PC-3 (cell line): ENCODE measurements at regions of chr1 and their contacts with region 1.

Region 1: GRCh38 chr1:153977250-153978240 is at the start of gene JTB:
- DNase-seq: peak; percentile 89
- ATAC-seq: peak; percentile 91
- H3K4me3 ChIP-seq: peak within 1 kb of the TSS; percentile 79
- H3K27ac ChIP-seq: peak within 1 kb of the TSS; percentile 8
- H3K4me1 ChIP-seq: peaks cover 18% of the 10 kb centered on the region
- H3K27me3 ChIP-seq: no peaks in the 10 kb centered on the region
- CTCF ChIP-seq: no peak
- total RNA-seq, gene JTB: 377 and 388 TPM in 2 replicates

Region 2: GRCh38 chr1:153929981-153930948 is 47.3 kb before region 1 on chr1:
- CTCF ChIA-PET with region 1: no interaction called
- POLR2A ChIA-PET with region 1: no interaction called
- intact Hi-C with region 1: no loop called
- DNase-seq: no peak
- ATAC-seq: 0 out of 2 replicates have a peak, but pooled peaks have one; percentile 34
- H3K4me3 ChIP-seq: no peak overlapping the region
- H3K27ac ChIP-seq: no peak overlapping the region
- H3K4me1 ChIP-seq: no peaks in the 10 kb centered on the region
- H3K27me3 ChIP-seq: no peaks in the 10 kb centered on the region
- CTCF ChIP-seq: peak; percentile 15; the same call in 1 of the 2 replicates

Region 3: GRCh38 chr1:153967082-153968000 is 10.2 kb before region 1 on chr1 and contains the start of gene CREB3L4:
- CTCF ChIA-PET with region 1: interaction called, 5 read pairs
- POLR2A ChIA-PET with region 1: interaction called, 13 read pairs
- intact Hi-C with region 1: loop called (anchors 1 kb)
- DNase-seq: peak; percentile 98
- ATAC-seq: peak; percentile 68
- H3K4me3 ChIP-seq: peak within 1 kb of the TSS; percentile 71
- H3K27ac ChIP-seq: peak within 1 kb of the TSS; percentile 81
- H3K4me1 ChIP-seq: peaks cover 31% of the 10 kb centered on the region
- H3K27me3 ChIP-seq: no peaks in the 10 kb centered on the region
- CTCF ChIP-seq: peak; percentile 55
- total RNA-seq, gene CREB3L4: 22.9 and 28.7 TPM in 2 replicates

Region 4: DNA sequence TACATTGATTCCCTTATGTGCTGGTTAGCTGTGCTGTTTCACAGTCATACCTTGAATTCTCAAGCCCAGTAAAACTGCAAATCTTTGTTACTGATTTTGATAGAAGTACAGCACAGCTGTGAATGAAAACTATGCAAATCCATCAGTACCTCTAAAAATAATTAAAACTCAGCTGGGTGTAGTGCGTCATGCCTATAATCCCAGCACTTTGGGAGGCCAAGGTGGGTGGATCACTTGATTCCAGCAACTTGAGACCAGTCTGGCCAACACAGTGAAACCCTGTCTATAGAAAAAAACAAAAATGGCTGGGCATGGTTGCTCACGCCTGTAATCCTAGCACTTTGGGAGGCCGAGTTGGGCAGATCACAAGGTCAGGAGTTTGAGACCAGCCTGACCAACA is 116.2 kb after region 1 on chr1:
- CTCF ChIA-PET with region 1: no interaction called
- POLR2A ChIA-PET with region 1: no interaction called
- intact Hi-C with region 1: no loop called
- DNase-seq: no peak
- ATAC-seq: no peak
- H3K4me3 ChIP-seq: no peak overlapping the region
- H3K27ac ChIP-seq: no peak overlapping the region
- H3K4me1 ChIP-seq: no peaks in the 10 kb centered on the region
- H3K27me3 ChIP-seq: no peaks in the 10 kb centered on the region
- CTCF ChIP-seq: no peak

Region 5: GRCh38 chr1:154157520-154158306 is 180.2 kb after region 1 on chr1:
- CTCF ChIA-PET with region 1: no interaction called
- POLR2A ChIA-PET with region 1: no interaction called
- intact Hi-C with region 1: no loop called
- DNase-seq: no peak
- ATAC-seq: no peak
- H3K4me3 ChIP-seq: no peak overlapping the region
- H3K27ac ChIP-seq: no peak overlapping the region
- H3K4me1 ChIP-seq: no peaks in the 10 kb centered on the region
- H3K27me3 ChIP-seq: no peaks in the 10 kb centered on the region
- CTCF ChIP-seq: no peak

Region 6: GRCh38 chr1:154536570-154536969 is 559.0 kb after region 1 on chr1:
- CTCF ChIA-PET with region 1: no interaction called
- POLR2A ChIA-PET with region 1: no interaction called
- intact Hi-C with region 1: no loop called
- DNase-seq: no peak
- ATAC-seq: no peak
- H3K4me3 ChIP-seq: no peak overlapping the region
- H3K27ac ChIP-seq: no peak overlapping the region
- H3K4me1 ChIP-seq: no peaks in the 10 kb centered on the region
- H3K27me3 ChIP-seq: peaks cover 47% of the 10 kb centered on the region
- CTCF ChIP-seq: no peak